ENCODE measurements at regions of chrX and their contacts with region 1.

Region 1: DNA sequence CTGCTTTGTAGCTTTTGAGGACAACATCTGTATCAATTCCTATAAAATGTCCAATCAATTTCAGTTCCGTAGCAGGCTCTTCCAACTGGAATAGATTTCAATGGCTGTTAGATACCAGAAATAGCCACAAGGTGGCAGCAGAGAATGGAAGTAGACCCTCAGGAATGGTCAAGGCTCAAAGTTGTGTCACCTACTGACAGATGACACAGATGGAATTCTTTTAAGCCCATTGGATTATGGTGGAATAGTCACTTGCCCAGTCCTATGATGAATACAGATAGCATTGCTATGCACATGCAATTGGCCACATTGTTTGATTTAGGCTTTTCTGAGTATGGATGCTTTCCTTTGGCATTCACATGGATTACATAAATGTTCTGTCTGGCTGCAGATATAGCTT is 130.4 kb upstream of the RADX start:
- DNase-seq: peak in 5 of 9 experiments; percentile 19 to 56 (median 51)
- ATAC-seq: no peak
- H3K4me3 ChIP-seq: no peak overlapping the region
- H3K4me3 Mint-ChIP-seq: no peak overlapping the region
- H3K27ac ChIP-seq: no peak overlapping the region
- H3K27ac Mint-ChIP-seq: no peak overlapping the region
- H3K4me1 ChIP-seq: peaks cover 10% of the 10 kb centered on the region
- H3K4me1 Mint-ChIP-seq: peaks cover 17% of the 10 kb centered on the region
- H3K27me3 ChIP-seq: no peaks in the 10 kb centered on the region
- H3K27me3 Mint-ChIP-seq: no peaks in the 10 kb centered on the region
- CTCF ChIP-seq: peak; percentile 54

Region 2: DNA sequence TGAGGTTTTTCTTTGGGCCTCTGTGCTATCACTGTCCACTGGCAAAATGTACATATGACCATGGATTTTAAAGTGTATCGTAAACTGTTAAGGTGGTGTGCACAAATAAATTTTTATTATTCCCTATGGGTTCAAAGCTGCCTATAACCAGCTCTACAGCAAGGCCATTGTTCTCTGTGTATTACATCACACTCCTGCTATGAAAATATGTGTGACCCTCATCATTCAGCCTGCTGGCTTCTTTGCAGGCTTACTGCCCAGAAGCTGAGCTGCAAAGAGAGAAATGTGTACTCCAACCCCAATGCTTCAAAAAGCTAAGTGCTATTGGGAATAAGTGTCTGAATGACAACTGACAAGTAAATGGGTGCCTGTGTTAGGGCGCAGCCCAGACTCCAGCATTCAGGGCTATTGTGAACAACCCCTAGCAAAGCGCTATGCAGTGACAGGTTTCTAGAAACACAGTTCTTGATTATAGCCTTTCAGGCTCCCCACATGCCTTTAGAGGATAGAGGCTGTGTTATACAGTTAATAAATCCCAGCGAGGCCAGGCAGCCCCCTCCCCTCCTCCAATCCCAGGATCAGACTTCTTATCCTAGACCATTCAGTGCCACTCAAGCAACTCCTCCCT is 89.9 kb before region 1 on chrX:
- CTCF ChIA-PET with region 1: no interaction called
- POLR2A ChIA-PET with region 1: no interaction called
- intact Hi-C with region 1: no loop called
- DNase-seq: no peak
- ATAC-seq: no peak
- H3K4me3 ChIP-seq: no peak overlapping the region
- H3K4me3 Mint-ChIP-seq: no peak overlapping the region
- H3K27ac ChIP-seq: no peak overlapping the region
- H3K27ac Mint-ChIP-seq: no peak overlapping the region
- H3K4me1 ChIP-seq: no peaks in the 10 kb centered on the region
- H3K4me1 Mint-ChIP-seq: no peaks in the 10 kb centered on the region
- H3K27me3 ChIP-seq: no peaks in the 10 kb centered on the region
- H3K27me3 Mint-ChIP-seq: no peaks in the 10 kb centered on the region
- CTCF ChIP-seq: no peak

Region 3: DNA sequence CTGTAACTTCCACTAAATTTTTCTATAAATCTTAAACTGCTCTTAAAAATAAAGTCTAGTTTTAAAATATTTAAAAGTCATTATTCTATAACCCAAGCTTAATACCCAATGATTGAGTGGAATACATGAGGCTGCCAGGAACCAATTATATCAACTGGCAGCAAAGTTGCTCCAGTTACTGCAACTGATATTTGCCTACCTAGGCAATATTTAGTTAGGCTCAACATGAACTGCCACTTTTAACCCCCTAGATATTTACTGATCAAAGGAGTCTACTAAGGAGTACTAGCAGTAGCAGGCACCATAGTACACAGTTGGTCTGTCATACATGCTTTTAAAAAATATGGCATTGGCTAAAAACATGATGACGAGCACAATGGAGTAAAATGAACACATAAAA is 100.5 kb after region 1 on chrX:
- CTCF ChIA-PET with region 1: no interaction called
- POLR2A ChIA-PET with region 1: no interaction called
- intact Hi-C with region 1: no loop called
- DNase-seq: no peak
- ATAC-seq: no peak
- H3K4me3 ChIP-seq: no peak overlapping the region
- H3K4me3 Mint-ChIP-seq: no peak overlapping the region
- H3K27ac ChIP-seq: no peak overlapping the region
- H3K27ac Mint-ChIP-seq: no peak overlapping the region
- H3K4me1 ChIP-seq: no peaks in the 10 kb centered on the region
- H3K4me1 Mint-ChIP-seq: no peaks in the 10 kb centered on the region
- H3K27me3 ChIP-seq: no peaks in the 10 kb centered on the region
- H3K27me3 Mint-ChIP-seq: no peaks in the 10 kb centered on the region
- CTCF ChIP-seq: no peak

Region 4: GRCh38 chrX:106611679-106612392 is 130.5 kb after region 1 on chrX and contains the start of gene RADX:
- CTCF ChIA-PET with region 1: interaction called, 5 read pairs
- POLR2A ChIA-PET with region 1: no interaction called
- intact Hi-C with region 1: loop called (anchors 1 to 5 kb)
- DNase-seq: peak; percentile 72 to 94 (median 83)
- ATAC-seq: peak; percentile 93
- H3K4me3 ChIP-seq: peak within 1 kb of the TSS; percentile 58 to 88
- H3K4me3 Mint-ChIP-seq: peak within 1 kb of the TSS; percentile 94
- H3K27ac ChIP-seq: peak within 1 kb of the TSS; percentile 77 to 81
- H3K27ac Mint-ChIP-seq: peak within 1 kb of the TSS; percentile 93
- H3K4me1 ChIP-seq: peaks cover 8% of the 10 kb centered on the region
- H3K4me1 Mint-ChIP-seq: peaks cover 35% of the 10 kb centered on the region
- H3K27me3 ChIP-seq: no peaks in the 10 kb centered on the region
- H3K27me3 Mint-ChIP-seq: no peaks in the 10 kb centered on the region
- CTCF ChIP-seq: no peak
- total RNA-seq, gene RADX: 8.9 to 9.1 TPM

Region 5: GRCh38 chrX:106619797-106620196 is 138.5 kb after region 1 on chrX:
- CTCF ChIA-PET with region 1: interaction called, 10 read pairs
- POLR2A ChIA-PET with region 1: no interaction called
- intact Hi-C with region 1: loop called (anchors 1 to 5 kb)
- DNase-seq: peak in 2 of 9 experiments; percentile 14 to 19
- ATAC-seq: no peak
- H3K4me3 ChIP-seq: no peak overlapping the region
- H3K4me3 Mint-ChIP-seq: no peak overlapping the region
- H3K27ac ChIP-seq: no peak overlapping the region
- H3K27ac Mint-ChIP-seq: no peak overlapping the region
- H3K4me1 ChIP-seq: no peaks in the 10 kb centered on the region
- H3K4me1 Mint-ChIP-seq: peaks cover 2% of the 10 kb centered on the region
- H3K27me3 ChIP-seq: no peaks in the 10 kb centered on the region
- H3K27me3 Mint-ChIP-seq: no peaks in the 10 kb centered on the region
- CTCF ChIP-seq: peak; percentile 30

Region 6: GRCh38 chrX:106791495-106791894 is 310.2 kb after region 1 on chrX:
- CTCF ChIA-PET with region 1: interaction called, 9 read pairs
- POLR2A ChIA-PET with region 1: no interaction called
- intact Hi-C with region 1: loop called in 1 of 2 experiments (anchors 1 kb)
- DNase-seq: peak in 2 of 9 experiments; percentile 22 to 25
- ATAC-seq: no peak
- H3K4me3 ChIP-seq: no peak overlapping the region
- H3K4me3 Mint-ChIP-seq: no peak overlapping the region
- H3K27ac ChIP-seq: no peak overlapping the region
- H3K27ac Mint-ChIP-seq: no peak overlapping the region
- H3K4me1 ChIP-seq: no peaks in the 10 kb centered on the region
- H3K4me1 Mint-ChIP-seq: no peaks in the 10 kb centered on the region
- H3K27me3 ChIP-seq: no peaks in the 10 kb centered on the region
- H3K27me3 Mint-ChIP-seq: no peaks in the 10 kb centered on the region
- CTCF ChIP-seq: no peak

Region 7: GRCh38 chrX:106894392-106894909 is 413.1 kb after region 1 on chrX:
- CTCF ChIA-PET with region 1: no interaction called
- POLR2A ChIA-PET with region 1: no interaction called
- intact Hi-C with region 1: loop called in 1 of 2 experiments (anchors 5 kb)
- DNase-seq: peak in 8 of 9 experiments; percentile 6 to 59 (median 48)
- ATAC-seq: peak; percentile 61
- H3K4me3 ChIP-seq: no peak overlapping the region
- H3K4me3 Mint-ChIP-seq: no peak overlapping the region
- H3K27ac ChIP-seq: no peak overlapping the region
- H3K27ac Mint-ChIP-seq: no peak overlapping the region
- H3K4me1 ChIP-seq: no peaks in the 10 kb centered on the region
- H3K4me1 Mint-ChIP-seq: no peaks in the 10 kb centered on the region
- H3K27me3 ChIP-seq: no peaks in the 10 kb centered on the region
- H3K27me3 Mint-ChIP-seq: peaks cover 4% of the 10 kb centered on the region
- CTCF ChIP-seq: peak; percentile 47

Region 8: GRCh38 chrX:107537815-107538214 is 1056.5 kb after region 1 on chrX:
- CTCF ChIA-PET with region 1: no interaction called
- POLR2A ChIA-PET with region 1: no interaction called
- intact Hi-C with region 1: no loop called
- DNase-seq: peak in 4 of 9 experiments; percentile 25 to 51 (median 39)
- ATAC-seq: no peak
- H3K4me3 ChIP-seq: no peak overlapping the region
- H3K4me3 Mint-ChIP-seq: no peak overlapping the region
- H3K27ac ChIP-seq: no peak overlapping the region
- H3K27ac Mint-ChIP-seq: no peak overlapping the region
- H3K4me1 ChIP-seq: no peaks in the 10 kb centered on the region
- H3K4me1 Mint-ChIP-seq: no peaks in the 10 kb centered on the region
- H3K27me3 ChIP-seq: no peaks in the 10 kb centered on the region
- H3K27me3 Mint-ChIP-seq: peaks cover 9% of the 10 kb centered on the region
- CTCF ChIP-seq: no peak